ENCODE measurements at regions of chr6 and their contacts with region 1.

Region 1: DNA sequence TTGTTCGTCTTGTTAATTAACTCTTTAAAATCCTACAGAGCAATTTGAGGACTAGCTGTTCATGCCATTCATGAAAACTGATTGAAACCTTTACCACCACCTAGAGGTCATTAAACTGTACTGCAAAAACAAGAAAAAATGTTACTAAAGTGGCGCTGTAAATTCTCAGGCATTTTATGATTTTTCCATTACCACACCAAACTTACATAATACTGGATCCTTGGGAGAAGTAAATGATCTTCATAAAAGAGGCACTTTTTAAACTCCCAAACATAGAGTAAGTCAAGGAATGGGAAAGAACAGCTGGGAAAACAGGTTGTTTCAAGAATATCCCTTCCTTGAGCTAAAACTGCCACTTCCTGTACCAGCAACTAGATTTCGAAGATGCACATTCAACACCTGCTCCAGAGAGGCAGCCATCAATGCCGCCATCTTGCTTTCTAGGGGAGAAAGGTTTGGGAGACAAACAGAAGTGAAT is 54.3 kb downstream of the MYLIP start:
- DNase-seq: no peak
- ATAC-seq: peak; percentile 78
- H3K4me3 ChIP-seq: no peak overlapping the region
- H3K27ac ChIP-seq: peak overlapping the region; percentile 15 to 50
- H3K4me1 ChIP-seq: no peaks in the 10 kb centered on the region
- H3K27me3 ChIP-seq: peaks cover 0 to 1% of the 10 kb centered on the region in 2 donors

Region 2: DNA sequence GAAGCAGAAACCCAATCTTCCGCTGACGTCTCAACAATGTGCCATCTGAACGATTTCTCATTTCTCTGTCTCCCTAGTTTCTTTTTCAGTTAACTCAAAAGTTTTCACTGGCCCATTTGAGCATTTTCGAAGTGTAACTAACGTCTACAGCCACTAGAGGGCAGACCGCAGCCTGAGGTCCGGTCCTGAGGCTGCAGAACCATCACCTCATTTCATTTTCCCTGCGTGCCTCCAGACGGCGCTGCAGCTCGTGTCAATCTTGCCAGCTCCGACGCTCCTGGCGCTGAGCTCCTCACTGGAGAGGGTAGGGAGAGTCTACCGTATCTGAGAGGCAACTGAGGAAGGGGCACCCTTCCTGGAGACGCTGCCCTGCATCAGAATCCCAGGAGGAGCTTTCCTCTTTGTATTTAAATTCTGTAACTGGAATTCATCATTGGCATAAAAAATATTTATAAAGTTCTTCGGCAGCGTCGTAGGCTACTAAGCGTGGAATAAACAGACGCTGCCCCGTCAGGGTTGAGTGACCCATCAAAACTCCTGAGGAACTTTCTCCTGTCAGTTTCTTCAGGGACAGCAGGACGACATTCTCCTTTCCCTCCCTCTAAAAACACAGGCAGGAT is 491.9 kb before region 1 on chr6:
- intact Hi-C with region 1: loop called in 1 of 2 experiments (anchors 5 kb)
- DNase-seq: peak; percentile 91 to 94
- ATAC-seq: peak; percentile 98
- H3K4me3 ChIP-seq: peak overlapping the region; percentile 74 to 75
- H3K27ac ChIP-seq: no peak overlapping the region
- H3K4me1 ChIP-seq: no peaks in the 10 kb centered on the region
- H3K27me3 ChIP-seq: no peaks in the 10 kb centered on the region

Region 3: GRCh38 chr6:16136621-16137450 is 46.4 kb before region 1 on chr6:
- intact Hi-C with region 1: loop called (anchors 5 kb)
- DNase-seq: peak in 1 of 2 donors; percentile 61
- ATAC-seq: no peak
- H3K4me3 ChIP-seq: peak overlapping the region in 1 of 2 donors; percentile 54
- H3K27ac ChIP-seq: peak overlapping the region in 1 of 2 donors; percentile 43
- H3K4me1 ChIP-seq: peaks cover 10 to 20% of the 10 kb centered on the region in 2 donors
- H3K27me3 ChIP-seq: no peaks in the 10 kb centered on the region

Measured in aorta (tissue), 5 donors.